ENCODE measurements at regions of chr12 and their contacts with region 1.

Region 1: GRCh38 chr12:121668750-121669520 is 519 bp downstream of the MORN3 start:
- DNase-seq: peak; percentile 80
- H3K4me3 Mint-ChIP-seq: no peak overlapping the region
- H3K27ac Mint-ChIP-seq: peak overlapping the region; percentile 63
- H3K4me1 Mint-ChIP-seq: peaks cover 58% of the 10 kb centered on the region
- H3K27me3 Mint-ChIP-seq: no peaks in the 10 kb centered on the region

Region 2: DNA sequence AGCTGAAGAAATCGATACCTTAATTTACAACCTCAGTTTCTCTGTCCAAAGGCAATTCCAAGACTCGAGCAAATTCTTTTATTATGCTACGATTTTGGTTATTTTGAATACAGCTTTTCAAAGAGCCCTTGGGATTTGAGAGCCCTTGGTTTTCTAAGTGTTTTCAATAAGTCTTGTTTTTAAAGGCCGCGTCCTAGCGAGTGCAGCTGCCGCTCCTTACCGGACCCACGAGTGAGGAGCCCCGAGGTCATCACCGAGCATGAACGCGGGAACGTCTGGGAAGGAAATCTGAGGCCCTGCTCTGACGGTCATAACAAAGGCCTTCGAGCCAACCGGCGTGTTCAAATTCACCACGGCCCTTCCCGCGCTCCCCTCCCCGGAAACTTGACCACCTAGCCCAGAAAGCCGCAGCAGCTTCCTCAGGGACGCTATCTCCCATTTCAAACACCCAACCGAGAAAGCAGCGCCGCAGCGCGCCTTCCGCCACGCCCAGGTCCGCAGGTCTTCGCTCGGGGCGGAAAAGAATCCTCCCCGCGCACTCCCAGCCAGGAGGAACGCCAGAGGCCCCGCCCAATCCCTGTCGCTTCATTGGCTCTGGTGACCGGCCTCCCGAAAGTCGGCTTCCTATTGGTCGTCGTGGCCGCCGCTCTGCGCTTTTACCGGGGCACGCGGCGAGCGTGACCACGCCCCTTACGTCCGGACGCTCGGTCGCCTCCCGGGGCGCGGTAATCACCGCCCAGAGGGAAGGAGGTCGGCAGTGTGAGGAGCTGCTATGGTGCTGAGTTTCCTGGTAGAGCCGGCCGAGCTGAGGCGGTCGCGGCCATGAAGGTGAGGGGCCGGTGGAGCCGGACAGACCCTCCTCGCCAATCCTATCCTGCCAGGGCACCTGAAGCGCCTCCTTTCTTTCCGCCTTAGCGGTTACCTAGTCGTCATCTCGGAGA is 269.3 kb before region 1 on chr12 and contains the start of gene RNF34:
- CTCF ChIA-PET with region 1: no interaction called
- intact Hi-C with region 1: loop called (anchors 2 kb)
- DNase-seq: peak; percentile 99
- H3K4me3 Mint-ChIP-seq: peak within 1 kb of the TSS; percentile 87
- H3K27ac Mint-ChIP-seq: peak within 1 kb of the TSS; percentile 93
- H3K4me1 Mint-ChIP-seq: peaks cover 32% of the 10 kb centered on the region
- H3K27me3 Mint-ChIP-seq: no peaks in the 10 kb centered on the region
- total RNA-seq, gene RNF34: 54.1 to 57.0 TPM

Region 3: DNA sequence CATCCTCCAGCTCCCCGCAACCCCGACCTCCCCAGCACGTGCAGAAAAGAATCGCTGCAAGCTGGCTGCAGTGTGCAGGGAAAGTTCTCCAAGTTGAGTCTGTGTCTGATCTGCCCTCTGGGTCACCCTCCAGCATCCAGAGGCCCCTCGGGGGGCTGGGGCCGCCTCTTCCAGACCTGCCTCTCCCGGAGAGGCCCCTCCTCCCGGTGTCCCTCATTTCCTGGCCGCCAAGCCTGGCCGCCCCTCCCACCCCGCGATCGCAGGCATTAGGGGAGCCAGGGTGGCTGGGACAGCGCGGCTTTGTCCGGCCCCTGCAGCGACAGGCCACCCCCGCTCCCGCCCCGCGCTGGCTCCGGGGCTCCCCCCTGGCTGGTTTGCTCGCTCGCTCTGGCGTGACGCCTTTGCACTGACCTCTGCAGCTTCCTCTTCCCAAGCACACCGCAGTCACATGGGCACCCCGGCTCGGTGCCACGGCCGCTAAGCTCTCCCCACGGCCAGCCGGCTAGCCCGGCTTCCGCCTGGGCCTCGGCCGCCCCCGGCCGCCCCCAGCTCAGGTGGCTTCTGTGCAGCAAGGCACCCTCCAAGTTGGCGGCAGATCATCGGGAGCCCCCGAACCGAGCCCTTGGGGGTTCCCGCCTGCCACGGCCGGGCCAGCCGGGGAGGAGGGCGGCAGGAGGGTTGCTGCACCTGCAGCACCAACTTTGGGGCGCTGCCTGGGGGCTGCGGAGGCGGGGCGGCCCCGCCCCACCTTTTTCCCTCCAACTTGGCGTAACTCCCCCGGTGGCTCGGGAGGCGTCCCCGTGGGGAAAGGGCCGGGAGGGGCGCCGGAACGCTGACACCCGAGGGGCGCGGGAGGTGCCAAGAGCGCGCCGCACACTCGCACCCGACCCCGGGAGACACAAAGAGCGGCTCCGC is 131.8 kb before region 1 on chr12:
- CTCF ChIA-PET with region 1: interaction called, 3 read pairs
- intact Hi-C with region 1: loop called (anchors 1 kb)
- DNase-seq: peak; percentile 68
- H3K4me3 Mint-ChIP-seq: peak overlapping the region; percentile 70
- H3K27ac Mint-ChIP-seq: peak overlapping the region; percentile 69
- H3K4me1 Mint-ChIP-seq: peaks cover 43% of the 10 kb centered on the region
- H3K27me3 Mint-ChIP-seq: no peaks in the 10 kb centered on the region

Region 4: DNA sequence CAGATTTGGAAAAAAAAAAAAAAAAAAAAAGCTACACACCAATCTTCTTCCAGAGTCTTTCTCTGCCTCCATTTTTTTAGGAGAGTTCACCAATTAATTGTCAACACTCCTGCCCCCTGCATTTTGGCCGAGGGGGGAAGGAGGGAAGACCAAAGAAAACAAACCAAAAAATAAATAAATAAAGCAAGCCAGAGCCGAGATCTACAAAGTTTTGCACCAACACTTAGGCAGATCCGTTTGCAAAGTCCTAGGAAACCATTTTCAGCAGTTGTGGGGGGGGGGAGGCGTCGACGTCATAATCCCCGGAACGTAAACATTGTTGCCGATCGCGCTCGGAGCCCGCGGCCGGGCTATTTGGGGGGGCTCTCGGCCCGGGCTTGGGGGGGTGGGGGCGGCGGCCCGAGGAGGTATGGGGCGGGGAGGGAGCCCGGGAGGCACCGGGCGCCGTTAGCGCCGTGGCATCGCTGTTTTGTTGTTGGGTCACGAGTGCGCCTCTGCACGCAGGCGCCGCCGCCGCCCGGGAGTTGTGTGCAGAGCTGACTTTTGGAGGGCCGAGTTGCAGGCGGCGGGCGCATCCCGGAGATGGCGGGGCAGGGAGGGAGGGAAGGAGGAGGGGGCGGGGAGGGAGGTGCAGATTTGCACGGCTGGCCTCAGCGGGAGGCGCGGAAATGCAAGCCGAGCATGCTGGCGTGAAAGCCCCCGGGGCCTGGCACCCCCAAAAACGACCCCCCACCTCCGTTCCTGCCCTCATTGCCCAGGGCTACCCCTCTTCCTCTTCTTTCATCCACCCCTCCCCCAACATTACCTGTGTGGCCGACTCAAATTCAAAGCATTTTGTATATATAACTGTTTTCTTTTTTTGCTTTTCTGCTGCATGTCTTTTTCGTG is 88.7 kb before region 1 on chr12:
- CTCF ChIA-PET with region 1: interaction called, 12 read pairs
- intact Hi-C with region 1: loop called (anchors 5 kb)
- DNase-seq: peak; percentile 85
- H3K4me3 Mint-ChIP-seq: peak overlapping the region; percentile 90
- H3K27ac Mint-ChIP-seq: peak overlapping the region; percentile 92
- H3K4me1 Mint-ChIP-seq: peaks cover 16% of the 10 kb centered on the region
- H3K27me3 Mint-ChIP-seq: no peaks in the 10 kb centered on the region

Region 5: GRCh38 chr12:121649819-121650353 is 19.0 kb before region 1 on chr12:
- CTCF ChIA-PET with region 1: interaction called, 20 read pairs
- intact Hi-C with region 1: no loop called
- DNase-seq: no peak
- H3K4me3 Mint-ChIP-seq: no peak overlapping the region
- H3K27ac Mint-ChIP-seq: peak overlapping the region; percentile 25
- H3K4me1 Mint-ChIP-seq: peaks cover 31% of the 10 kb centered on the region
- H3K27me3 Mint-ChIP-seq: no peaks in the 10 kb centered on the region

Region 6: DNA sequence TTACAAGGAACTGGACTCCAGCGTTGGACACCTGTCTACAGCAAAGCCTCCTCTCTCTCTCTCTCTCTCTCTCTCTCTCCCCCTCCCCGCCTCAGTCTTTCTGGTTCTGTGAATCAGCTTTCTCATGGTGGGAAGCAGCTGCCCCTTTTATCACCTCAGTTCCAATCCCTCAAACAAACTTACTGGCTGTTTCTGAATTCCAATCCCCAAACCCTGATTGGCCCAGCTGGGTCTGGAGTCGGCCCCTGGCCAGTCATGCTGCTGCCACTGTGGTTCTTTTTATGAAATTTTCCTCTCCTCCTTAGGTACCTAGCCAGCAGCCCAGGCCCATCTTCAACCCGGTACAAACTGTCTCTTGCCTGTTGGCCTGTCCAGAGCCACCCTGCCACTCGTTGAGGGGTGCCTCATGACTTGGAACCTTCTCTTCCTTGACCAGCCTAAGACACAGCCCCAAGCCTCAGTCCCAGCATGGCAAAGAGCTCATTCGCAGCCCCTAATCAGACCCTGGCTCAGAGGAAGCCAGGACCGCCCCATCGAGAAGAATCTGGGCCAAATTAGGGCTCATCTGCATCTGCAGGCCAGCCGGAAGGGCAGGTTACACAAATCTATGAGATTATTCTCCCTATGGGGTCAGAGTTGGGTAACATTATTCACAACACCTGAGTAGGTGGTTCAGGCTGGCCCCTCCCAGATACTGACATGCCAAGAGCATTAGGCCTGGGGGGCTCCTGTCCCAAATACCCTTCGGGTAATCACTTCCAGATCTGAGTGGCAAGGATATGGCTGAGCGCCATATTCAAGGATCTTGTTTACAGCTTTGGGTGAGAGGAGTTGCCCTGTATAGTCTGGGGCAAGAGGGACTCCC is 10.0 kb after region 1 on chr12:
- CTCF ChIA-PET with region 1: interaction called, 12 read pairs
- intact Hi-C with region 1: no loop called
- DNase-seq: no peak
- H3K4me3 Mint-ChIP-seq: no peak overlapping the region
- H3K27ac Mint-ChIP-seq: no peak overlapping the region
- H3K4me1 Mint-ChIP-seq: peaks cover 8% of the 10 kb centered on the region
- H3K27me3 Mint-ChIP-seq: no peaks in the 10 kb centered on the region